Activated CD8-positive, alpha-beta T cell treated with anti-CD3 and anti-CD28 coated beads, Interleukin-2, amount 10 ng/mL, durations not matched to agents 7 days and 5 days (primary cell): ENCODE measurements at regions of chr22 and their contacts with region 1.

Region 1: GRCh38 chr22:41800348-41801146 is at the start of gene CCDC134:
- DNase-seq: peak; percentile 94
- ATAC-seq: peak; percentile 98
- H3K4me3 Mint-ChIP-seq: peak within 1 kb of the TSS; percentile 98
- H3K27ac Mint-ChIP-seq: peak within 1 kb of the TSS; percentile 99
- H3K4me1 Mint-ChIP-seq: peaks cover 43% of the 10 kb centered on the region
- H3K27me3 Mint-ChIP-seq: no peaks in the 10 kb centered on the region
- total RNA-seq, gene CCDC134: 20.3 to 20.9 TPM

Region 2: DNA sequence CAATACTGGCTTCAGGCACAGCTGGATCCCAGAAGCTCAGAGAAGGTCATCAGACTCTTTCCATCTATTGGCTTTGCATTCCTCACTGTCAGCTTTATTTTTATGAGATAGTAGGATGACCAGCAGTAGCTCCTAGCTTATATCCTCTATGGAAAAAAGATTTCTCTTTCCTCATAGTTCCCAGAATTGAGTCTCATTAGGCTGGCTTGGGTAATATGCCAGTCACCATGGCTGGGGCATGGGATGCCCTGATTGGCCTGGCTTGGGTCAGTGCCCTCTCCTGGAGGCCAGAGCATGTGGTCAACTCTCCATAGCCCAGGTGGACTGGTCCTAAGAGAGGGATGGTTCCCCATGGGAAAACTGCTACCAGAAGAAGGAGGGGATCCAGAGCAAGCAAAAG is 14.1 kb before region 1 on chr22:
- CTCF ChIA-PET with region 1: interaction called, 50 read pairs
- POLR2A ChIA-PET with region 1: interaction called, 188 read pairs
- DNase-seq: no peak
- ATAC-seq: no peak
- H3K4me3 Mint-ChIP-seq: no peak overlapping the region
- H3K27ac Mint-ChIP-seq: no peak overlapping the region
- H3K4me1 Mint-ChIP-seq: peaks cover 23% of the 10 kb centered on the region
- H3K27me3 Mint-ChIP-seq: no peaks in the 10 kb centered on the region

Region 3: GRCh38 chr22:41868556-41868955 is 68.0 kb after region 1 on chr22:
- CTCF ChIA-PET with region 1: no interaction called
- POLR2A ChIA-PET with region 1: no interaction called
- DNase-seq: no peak
- ATAC-seq: no peak
- H3K4me3 Mint-ChIP-seq: no peak overlapping the region
- H3K27ac Mint-ChIP-seq: no peak overlapping the region
- H3K4me1 Mint-ChIP-seq: peaks cover 20% of the 10 kb centered on the region
- H3K27me3 Mint-ChIP-seq: no peaks in the 10 kb centered on the region